Posterior cingulate gyrus (tissue), 11 donors: ENCODE measurements at regions of chr11 and their contacts with region 1.

Region 1: GRCh38 chr11:33329705-33330329 is 72.6 kb downstream of the HIPK3 start:
- DNase-seq: peak in 6 of 10 donors; percentile 15 to 87 (median 40)

Region 2: GRCh38 chr11:33161120-33162005 is 168.5 kb before region 1 on chr11 and contains the start of gene CSTF3:
- intact Hi-C with region 1: loop called (anchors 2 kb)
- DNase-seq: peak; percentile 100